GM12878 (cell line): ENCODE measurements at regions of chr18 and their contacts with region 1.

Region 1: DNA sequence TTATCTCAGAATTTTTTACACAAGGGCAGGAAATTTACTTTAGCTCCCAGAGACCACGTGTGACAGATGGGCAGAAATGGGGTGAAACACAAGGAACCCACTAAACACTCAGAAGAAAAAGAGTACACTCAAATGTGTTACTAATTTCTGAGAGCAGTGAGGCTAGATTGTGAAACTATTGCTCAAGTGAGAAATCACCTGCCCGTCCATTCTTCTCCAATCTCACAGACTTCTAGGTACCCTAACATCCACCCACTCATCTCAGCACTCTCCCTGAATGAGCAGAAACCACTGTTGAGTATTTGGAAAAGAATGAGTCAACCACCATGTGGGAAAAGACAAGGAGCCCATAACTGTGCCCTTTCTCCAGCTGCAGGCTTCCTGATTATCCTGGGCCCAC is 293.0 kb upstream of the CDH2 start:
- DNase-seq: no peak
- ATAC-seq: peak; percentile 44
- H3K4me3 ChIP-seq: no peak overlapping the region
- H3K27ac ChIP-seq: no peak overlapping the region
- H3K4me1 ChIP-seq: no peaks in the 10 kb centered on the region
- H3K27me3 ChIP-seq: no peaks in the 10 kb centered on the region
- CTCF ChIP-seq: no peak
- EP300 ChIP-seq: no peak
- POLR2A ChIP-seq: no peak
- RAD21 ChIP-seq: no peak

Region 2: GRCh38 chr18:28485918-28486317 is 16.0 kb after region 1 on chr18:
- CTCF ChIA-PET with region 1: no interaction called
- POLR2A ChIA-PET with region 1: no interaction called
- RAD21 ChIA-PET with region 1: no interaction called
- SMC1A ChIA-PET with region 1: interaction called, 10 read pairs
- in situ Hi-C with region 1: no loop called
- intact Hi-C with region 1: no loop called
- DNase-seq: no peak
- ATAC-seq: peak; percentile 87
- H3K4me3 ChIP-seq: no peak overlapping the region
- H3K27ac ChIP-seq: no peak overlapping the region
- H3K4me1 ChIP-seq: no peaks in the 10 kb centered on the region
- H3K27me3 ChIP-seq: no peaks in the 10 kb centered on the region
- CTCF ChIP-seq: no peak
- EP300 ChIP-seq: no peak
- POLR2A ChIP-seq: no peak
- RAD21 ChIP-seq: no peak